HAP-1 (cell line): ENCODE measurements at regions of chr5 and their contacts with region 1.

Region 1: GRCh38 chr5:135560858-135561257 is 17.9 kb downstream of the CXCL14 start:
- DNase-seq: peak; percentile 83 to 92
- H3K4me3 ChIP-seq: no peak overlapping the region
- H3K4me1 ChIP-seq: peaks cover 31% of the 10 kb centered on the region
- H3K27me3 ChIP-seq: no peaks in the 10 kb centered on the region

Region 2: DNA sequence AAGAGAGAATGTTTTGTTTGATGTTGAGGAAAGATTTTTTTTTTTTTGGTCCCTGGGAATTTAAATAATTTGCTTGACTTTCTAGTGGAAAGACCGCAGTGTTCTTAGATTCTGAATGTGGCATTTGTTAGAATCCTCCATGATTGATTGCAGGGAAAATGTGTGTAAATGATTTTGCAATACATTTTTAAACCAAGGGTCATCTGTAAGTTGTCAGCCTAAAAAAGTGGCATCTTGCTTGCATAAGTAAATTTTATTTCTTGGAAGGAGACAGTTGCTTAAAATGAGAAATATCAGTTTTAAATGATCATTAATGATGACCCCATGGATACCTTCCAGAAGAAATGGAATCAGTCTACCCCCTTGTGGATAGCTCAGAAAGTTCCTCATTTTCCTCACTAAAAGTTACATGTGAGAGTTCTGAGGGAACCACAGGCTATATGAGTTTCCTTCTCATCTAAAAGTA is 168.5 kb after region 1 on chr5:
- in situ Hi-C with region 1: loop called (anchors 5 kb)
- DNase-seq: peak in 1 of 2 experiments; percentile 60
- H3K4me3 ChIP-seq: no peak overlapping the region
- H3K4me1 ChIP-seq: peaks cover 31% of the 10 kb centered on the region
- H3K27me3 ChIP-seq: no peaks in the 10 kb centered on the region

Region 3: GRCh38 chr5:135829681-135830383 is 269.0 kb after region 1 on chr5:
- in situ Hi-C with region 1: loop called (anchors 5 kb)
- DNase-seq: peak; percentile 49 to 85
- H3K4me3 ChIP-seq: no peak overlapping the region
- H3K4me1 ChIP-seq: peaks cover 1% of the 10 kb centered on the region
- H3K27me3 ChIP-seq: no peaks in the 10 kb centered on the region